Activated CD8-positive, alpha-beta T cell treated with anti-CD3 and anti-CD28 coated beads for 36 hours (primary cell): ENCODE measurements at regions of chr2 and their contacts with region 1.

Region 1: GRCh38 chr2:105114551-105114950 is 76.7 kb downstream of the MRPS9 start:
- DNase-seq: no peak
- ATAC-seq: no peak
- H3K4me3 Mint-ChIP-seq: no peak overlapping the region
- H3K27ac Mint-ChIP-seq: no peak overlapping the region
- H3K4me1 Mint-ChIP-seq: no peaks in the 10 kb centered on the region
- H3K27me3 Mint-ChIP-seq: no peaks in the 10 kb centered on the region
- CTCF ChIP-seq: peak; percentile 85

Region 2: GRCh38 chr2:105102963-105103421 is 11.6 kb before region 1 on chr2:
- CTCF ChIA-PET with region 1: interaction called, 27 read pairs
- POLR2A ChIA-PET with region 1: interaction called, 3 read pairs
- intact Hi-C with region 1: no loop called
- DNase-seq: no peak
- ATAC-seq: no peak
- H3K4me3 Mint-ChIP-seq: no peak overlapping the region
- H3K27ac Mint-ChIP-seq: no peak overlapping the region
- H3K4me1 Mint-ChIP-seq: no peaks in the 10 kb centered on the region
- H3K27me3 Mint-ChIP-seq: no peaks in the 10 kb centered on the region
- CTCF ChIP-seq: no peak

Region 3: GRCh38 chr2:105125428-105125827 is 10.9 kb after region 1 on chr2:
- CTCF ChIA-PET with region 1: interaction called, 11 read pairs
- POLR2A ChIA-PET with region 1: no interaction called
- intact Hi-C with region 1: no loop called
- DNase-seq: no peak
- ATAC-seq: no peak
- H3K4me3 Mint-ChIP-seq: no peak overlapping the region
- H3K27ac Mint-ChIP-seq: no peak overlapping the region
- H3K4me1 Mint-ChIP-seq: peaks cover 21% of the 10 kb centered on the region
- H3K27me3 Mint-ChIP-seq: peaks cover 11% of the 10 kb centered on the region
- CTCF ChIP-seq: no peak

Region 4: DNA sequence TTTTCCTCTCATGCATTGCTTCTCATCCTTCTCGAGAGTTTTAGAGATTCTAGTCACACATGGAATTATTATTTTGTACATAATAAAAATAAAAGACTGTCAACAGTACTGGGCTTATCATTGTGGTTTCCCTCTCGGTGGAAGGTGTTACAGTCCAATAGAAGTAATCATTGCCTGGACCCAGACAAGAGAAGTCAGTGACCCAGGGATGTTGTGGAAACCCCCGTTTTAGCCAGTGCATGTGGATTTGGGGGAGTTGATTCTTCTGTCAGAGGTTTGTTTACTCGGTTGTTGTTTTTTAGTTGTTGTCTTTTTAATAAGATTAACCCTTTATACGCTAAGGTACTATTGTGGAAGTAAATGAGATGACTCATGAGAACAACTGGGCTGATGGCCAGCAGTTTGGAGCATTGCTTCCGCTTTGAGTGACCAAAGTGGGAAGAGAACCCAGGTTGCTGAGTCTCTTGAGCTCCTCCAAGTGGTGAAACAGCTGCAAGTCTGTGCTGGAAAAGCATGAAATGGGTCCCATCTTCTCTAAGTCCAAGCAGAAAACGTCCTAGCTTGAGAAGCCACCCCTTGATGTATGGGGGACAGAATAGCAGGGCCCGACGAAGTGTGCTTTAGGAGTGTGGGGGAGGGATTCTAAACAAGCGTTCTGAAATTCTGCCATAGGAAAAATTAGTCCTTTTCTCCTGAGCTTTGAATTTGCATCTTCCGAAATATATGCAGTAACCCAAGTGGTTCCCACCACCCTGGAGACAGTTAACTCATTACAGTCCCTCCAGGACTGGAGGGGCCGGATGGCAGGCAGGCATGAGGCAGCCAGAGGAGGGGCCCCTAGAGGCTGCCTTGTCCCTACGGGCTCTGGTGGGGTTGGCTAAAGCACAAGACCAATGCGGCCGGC is 65.2 kb after region 1 on chr2:
- CTCF ChIA-PET with region 1: interaction called, 11 read pairs
- POLR2A ChIA-PET with region 1: no interaction called
- intact Hi-C with region 1: loop called (anchors 10 kb)
- DNase-seq: peak; percentile 9
- ATAC-seq: no peak
- H3K4me3 Mint-ChIP-seq: no peak overlapping the region
- H3K27ac Mint-ChIP-seq: no peak overlapping the region
- H3K4me1 Mint-ChIP-seq: no peaks in the 10 kb centered on the region
- H3K27me3 Mint-ChIP-seq: peaks cover 6% of the 10 kb centered on the region
- CTCF ChIP-seq: no peak

Region 5: DNA sequence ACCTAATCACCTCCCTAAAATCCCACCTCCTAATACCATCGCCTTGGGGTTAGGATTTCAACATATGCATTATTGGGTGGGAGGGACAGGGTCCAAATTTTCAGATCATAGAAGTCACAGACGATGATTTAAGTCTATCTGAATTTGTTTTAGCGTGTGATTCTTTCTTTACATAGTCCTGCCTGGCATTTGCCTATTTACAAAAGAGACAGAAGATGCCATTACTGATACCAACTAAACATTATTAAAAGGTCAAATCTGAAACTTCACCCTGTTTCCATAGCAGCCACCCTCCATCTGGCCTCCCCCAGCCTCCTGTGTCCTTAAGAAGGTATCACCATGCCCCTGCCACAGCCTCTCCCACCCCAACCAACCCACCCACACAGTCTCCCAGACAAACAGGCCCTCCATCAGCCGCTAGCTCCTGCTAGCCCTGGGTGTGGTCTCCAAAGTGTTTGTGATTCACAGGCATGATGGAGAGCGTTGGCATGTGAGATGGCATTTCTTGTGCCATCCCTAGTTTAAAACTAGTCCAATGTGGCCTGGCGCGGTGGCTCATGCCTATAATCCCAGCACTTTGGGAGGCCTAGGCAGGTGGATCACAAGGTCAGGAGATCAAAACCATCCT is 82.0 kb after region 1 on chr2:
- CTCF ChIA-PET with region 1: no interaction called
- POLR2A ChIA-PET with region 1: no interaction called
- intact Hi-C with region 1: no loop called
- DNase-seq: no peak
- ATAC-seq: no peak
- H3K4me3 Mint-ChIP-seq: no peak overlapping the region
- H3K27ac Mint-ChIP-seq: no peak overlapping the region
- H3K4me1 Mint-ChIP-seq: no peaks in the 10 kb centered on the region
- H3K27me3 Mint-ChIP-seq: peaks cover 12% of the 10 kb centered on the region
- CTCF ChIP-seq: no peak

Region 6: GRCh38 chr2:105215586-105216192 is 101.1 kb after region 1 on chr2:
- CTCF ChIA-PET with region 1: interaction called, 13 read pairs
- POLR2A ChIA-PET with region 1: no interaction called
- intact Hi-C with region 1: no loop called
- DNase-seq: no peak
- ATAC-seq: no peak
- H3K4me3 Mint-ChIP-seq: no peak overlapping the region
- H3K27ac Mint-ChIP-seq: no peak overlapping the region
- H3K4me1 Mint-ChIP-seq: no peaks in the 10 kb centered on the region
- H3K27me3 Mint-ChIP-seq: peaks cover 1% of the 10 kb centered on the region
- CTCF ChIP-seq: no peak

Region 7: GRCh38 chr2:105235388-105236054 is 121.0 kb after region 1 on chr2:
- CTCF ChIA-PET with region 1: interaction called, 277 read pairs
- POLR2A ChIA-PET with region 1: interaction called, 3 read pairs
- intact Hi-C with region 1: loop called (anchors 1 kb)
- DNase-seq: peak; percentile 90
- ATAC-seq: peak; percentile 68
- H3K4me3 Mint-ChIP-seq: no peak overlapping the region
- H3K27ac Mint-ChIP-seq: no peak overlapping the region
- H3K4me1 Mint-ChIP-seq: peaks cover 11% of the 10 kb centered on the region
- H3K27me3 Mint-ChIP-seq: peaks cover 10% of the 10 kb centered on the region
- CTCF ChIP-seq: peak; percentile 78

Region 8: GRCh38 chr2:106205488-106205887 is 1090.9 kb after region 1 on chr2:
- CTCF ChIA-PET with region 1: no interaction called
- POLR2A ChIA-PET with region 1: no interaction called
- intact Hi-C with region 1: no loop called
- DNase-seq: no peak
- ATAC-seq: peak; percentile 72
- H3K4me3 Mint-ChIP-seq: no peak overlapping the region
- H3K27ac Mint-ChIP-seq: no peak overlapping the region
- H3K4me1 Mint-ChIP-seq: peaks cover 6% of the 10 kb centered on the region
- H3K27me3 Mint-ChIP-seq: no peaks in the 10 kb centered on the region
- CTCF ChIP-seq: no peak